ENCODE measurements at regions of chr3 and their contacts with region 1.

Region 1: GRCh38 chr3:72996473-72997333 is at the start of gene PPP4R2:
- DNase-seq: peak; percentile 83 to 98 (median 90)
- ATAC-seq: peak; percentile 85
- H3K4me3 ChIP-seq: peak within 1 kb of the TSS; percentile 90
- H3K4me3 Mint-ChIP-seq: peak within 1 kb of the TSS; percentile 88
- H3K27ac ChIP-seq: peak within 1 kb of the TSS; percentile 89 to 93
- H3K27ac Mint-ChIP-seq: peak within 1 kb of the TSS; percentile 86
- H3K4me1 ChIP-seq: peaks cover 29% of the 10 kb centered on the region
- H3K4me1 Mint-ChIP-seq: peaks cover 48% of the 10 kb centered on the region
- H3K27me3 ChIP-seq: no peaks in the 10 kb centered on the region
- H3K27me3 Mint-ChIP-seq: no peaks in the 10 kb centered on the region
- CTCF ChIP-seq: no peak
- total RNA-seq, gene PPP4R2: 67.8 to 80.3 TPM

Region 2: GRCh38 chr3:72447059-72447946 is 549.4 kb before region 1 on chr3:
- CTCF ChIA-PET with region 1: no interaction called
- POLR2A ChIA-PET with region 1: no interaction called
- intact Hi-C with region 1: loop called in 1 of 2 experiments (anchors 2 kb)
- DNase-seq: peak; percentile 86 to 98 (median 93)
- ATAC-seq: peak; percentile 89
- H3K4me3 ChIP-seq: peak overlapping the region; percentile 69
- H3K4me3 Mint-ChIP-seq: peak overlapping the region; percentile 85
- H3K27ac ChIP-seq: peak overlapping the region in 1 of 2 donors; percentile 55
- H3K27ac Mint-ChIP-seq: peak overlapping the region; percentile 74
- H3K4me1 ChIP-seq: peaks cover 16% of the 10 kb centered on the region
- H3K4me1 Mint-ChIP-seq: peaks cover 43% of the 10 kb centered on the region
- H3K27me3 ChIP-seq: no peaks in the 10 kb centered on the region
- H3K27me3 Mint-ChIP-seq: no peaks in the 10 kb centered on the region
- CTCF ChIP-seq: peak; percentile 13

Region 3: DNA sequence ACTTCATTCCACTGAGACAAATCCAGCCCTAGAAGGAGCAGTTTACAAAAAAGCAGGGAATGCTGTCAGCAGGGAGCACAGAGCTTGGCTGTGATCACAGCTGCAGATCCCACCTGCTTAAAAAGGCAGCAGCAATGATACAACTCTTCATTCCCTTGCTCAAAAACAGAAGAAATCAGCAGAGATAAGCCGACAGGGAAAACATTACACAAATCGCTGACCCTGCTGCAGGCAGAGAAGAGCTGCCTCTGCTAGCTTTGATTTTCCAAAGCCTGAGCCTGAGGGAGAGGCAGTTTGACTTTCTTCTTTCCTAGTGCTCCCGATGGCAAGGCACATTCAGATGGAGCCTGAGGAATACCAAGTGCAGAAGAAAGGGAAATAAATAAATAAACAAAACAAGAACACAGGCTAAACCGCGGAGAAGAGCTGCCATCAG is 228.7 kb before region 1 on chr3:
- CTCF ChIA-PET with region 1: no interaction called
- POLR2A ChIA-PET with region 1: interaction called, 3 read pairs
- intact Hi-C with region 1: loop called in 1 of 2 experiments (anchors 10 kb)
- DNase-seq: no peak
- ATAC-seq: no peak
- H3K4me3 ChIP-seq: no peak overlapping the region
- H3K4me3 Mint-ChIP-seq: no peak overlapping the region
- H3K27ac ChIP-seq: no peak overlapping the region
- H3K27ac Mint-ChIP-seq: no peak overlapping the region
- H3K4me1 ChIP-seq: no peaks in the 10 kb centered on the region
- H3K4me1 Mint-ChIP-seq: peaks cover 26% of the 10 kb centered on the region
- H3K27me3 ChIP-seq: no peaks in the 10 kb centered on the region
- H3K27me3 Mint-ChIP-seq: no peaks in the 10 kb centered on the region
- CTCF ChIP-seq: no peak

Region 4: DNA sequence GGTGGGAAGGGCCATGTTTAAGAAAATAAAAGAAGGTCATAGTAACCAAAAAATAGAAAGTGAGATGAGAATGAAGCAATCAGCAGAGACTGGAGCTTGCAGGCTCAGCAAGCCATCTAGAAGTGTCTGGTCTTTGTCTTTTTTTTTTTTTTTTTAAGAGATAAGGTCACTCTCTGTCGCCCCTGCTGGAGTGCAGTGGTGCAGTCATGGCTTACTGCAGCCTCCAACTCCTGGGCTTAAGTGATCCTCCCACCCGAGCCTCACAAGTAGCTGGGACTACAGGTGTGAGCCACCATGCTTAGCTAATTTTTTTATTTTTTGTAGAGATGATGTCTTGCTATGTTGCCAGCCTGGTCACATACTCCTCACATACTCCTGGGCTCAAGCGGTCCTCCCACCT is 72.6 kb before region 1 on chr3:
- CTCF ChIA-PET with region 1: no interaction called
- POLR2A ChIA-PET with region 1: no interaction called
- intact Hi-C with region 1: no loop called
- DNase-seq: peak in 1 of 14 experiments; percentile 1
- ATAC-seq: no peak
- H3K4me3 ChIP-seq: no peak overlapping the region
- H3K4me3 Mint-ChIP-seq: no peak overlapping the region
- H3K27ac ChIP-seq: no peak overlapping the region
- H3K27ac Mint-ChIP-seq: no peak overlapping the region
- H3K4me1 ChIP-seq: no peaks in the 10 kb centered on the region
- H3K4me1 Mint-ChIP-seq: no peaks in the 10 kb centered on the region
- H3K27me3 ChIP-seq: no peaks in the 10 kb centered on the region
- H3K27me3 Mint-ChIP-seq: peaks cover 7% of the 10 kb centered on the region
- CTCF ChIP-seq: no peak

Region 5: DNA sequence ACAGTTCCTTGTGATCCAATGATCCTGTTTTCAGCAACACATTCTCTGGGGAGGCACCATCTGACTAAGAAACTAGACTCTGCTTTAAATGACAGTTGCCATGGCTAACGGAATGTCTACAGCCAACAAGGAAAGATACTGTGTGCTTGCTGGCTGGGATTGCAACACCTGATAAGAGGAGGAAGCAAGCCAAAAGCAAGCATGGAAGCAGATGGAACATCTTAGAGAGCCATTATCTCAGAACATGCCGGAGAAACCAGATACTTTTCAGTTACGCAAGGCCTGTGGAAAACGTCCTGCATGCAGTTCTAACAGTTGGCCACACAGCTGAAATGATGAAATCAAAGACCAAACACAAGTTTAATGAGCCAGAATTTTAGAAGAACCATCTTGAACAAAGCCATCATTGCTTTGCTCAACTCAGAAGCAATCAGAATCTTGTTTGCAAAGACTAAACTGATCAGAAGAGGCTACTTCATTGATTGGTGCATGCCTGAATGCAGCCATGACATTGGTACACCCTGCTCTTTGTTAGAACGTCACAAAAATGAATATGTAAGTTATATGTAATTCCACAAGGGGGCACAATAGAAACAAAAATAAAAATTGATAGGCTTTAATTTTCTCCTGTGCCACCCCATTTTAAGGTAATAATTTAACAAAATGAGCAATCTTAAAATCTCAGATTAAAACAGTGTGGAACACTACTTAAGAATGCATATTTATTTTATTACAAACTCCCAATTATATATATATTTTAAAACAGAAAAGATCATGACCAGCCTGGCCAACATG is 58.0 kb before region 1 on chr3:
- CTCF ChIA-PET with region 1: no interaction called
- POLR2A ChIA-PET with region 1: interaction called, 3 read pairs
- intact Hi-C with region 1: loop called (anchors 1 to 2 kb)
- DNase-seq: peak in 5 of 14 experiments; percentile 25 to 75 (median 65)
- ATAC-seq: peak; percentile 100
- H3K4me3 ChIP-seq: no peak overlapping the region
- H3K4me3 Mint-ChIP-seq: no peak overlapping the region
- H3K27ac ChIP-seq: no peak overlapping the region
- H3K27ac Mint-ChIP-seq: no peak overlapping the region
- H3K4me1 ChIP-seq: no peaks in the 10 kb centered on the region
- H3K4me1 Mint-ChIP-seq: no peaks in the 10 kb centered on the region
- H3K27me3 ChIP-seq: no peaks in the 10 kb centered on the region
- H3K27me3 Mint-ChIP-seq: no peaks in the 10 kb centered on the region
- CTCF ChIP-seq: peak; percentile 77

Region 6: DNA sequence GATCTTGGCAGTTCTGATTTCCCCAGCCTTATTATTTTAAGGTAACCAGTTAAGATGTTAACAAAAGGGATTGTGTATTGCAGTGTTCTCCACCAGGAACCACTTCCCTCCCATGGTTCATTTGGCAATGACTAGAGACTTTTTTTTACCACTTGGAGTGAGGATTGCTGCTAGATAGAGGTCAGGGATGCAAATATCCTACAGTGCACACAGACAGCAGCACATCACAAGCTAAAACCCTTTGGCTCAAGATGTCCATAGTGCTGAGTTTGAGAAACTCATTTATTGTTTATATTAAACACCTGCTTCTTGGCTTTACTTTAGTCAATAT is 40.6 kb after region 1 on chr3:
- CTCF ChIA-PET with region 1: interaction called, 3 read pairs
- POLR2A ChIA-PET with region 1: no interaction called
- intact Hi-C with region 1: loop called in 1 of 2 experiments (anchors 5 kb)
- DNase-seq: no peak
- ATAC-seq: no peak
- H3K4me3 ChIP-seq: no peak overlapping the region
- H3K4me3 Mint-ChIP-seq: no peak overlapping the region
- H3K27ac ChIP-seq: no peak overlapping the region
- H3K27ac Mint-ChIP-seq: peak overlapping the region; percentile 68
- H3K4me1 ChIP-seq: peaks cover 12% of the 10 kb centered on the region
- H3K4me1 Mint-ChIP-seq: peaks cover 83% of the 10 kb centered on the region
- H3K27me3 ChIP-seq: no peaks in the 10 kb centered on the region
- H3K27me3 Mint-ChIP-seq: no peaks in the 10 kb centered on the region
- CTCF ChIP-seq: no peak

Region 7: DNA sequence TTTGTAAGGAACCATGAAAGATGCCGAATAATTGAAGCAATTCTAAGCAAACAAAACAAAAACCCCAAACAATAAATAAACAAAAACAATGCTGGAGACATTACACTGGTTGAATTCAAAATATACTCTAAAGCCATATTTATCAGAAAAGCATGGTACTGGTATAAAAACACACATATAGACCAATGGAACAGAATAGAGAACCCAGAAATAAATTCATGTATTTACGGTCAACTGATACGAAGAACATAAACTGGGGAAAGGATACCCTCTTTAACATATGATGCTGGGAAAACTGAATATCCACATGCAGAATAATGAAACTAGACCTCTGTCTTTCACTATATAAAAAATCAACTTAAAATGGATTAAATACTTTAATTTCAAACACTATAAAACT is 842.3 kb after region 1 on chr3:
- CTCF ChIA-PET with region 1: no interaction called
- POLR2A ChIA-PET with region 1: no interaction called
- intact Hi-C with region 1: no loop called
- DNase-seq: no peak
- ATAC-seq: no peak
- H3K4me3 ChIP-seq: no peak overlapping the region
- H3K4me3 Mint-ChIP-seq: no peak overlapping the region
- H3K27ac ChIP-seq: no peak overlapping the region
- H3K27ac Mint-ChIP-seq: no peak overlapping the region
- H3K4me1 ChIP-seq: no peaks in the 10 kb centered on the region
- H3K4me1 Mint-ChIP-seq: no peaks in the 10 kb centered on the region
- H3K27me3 ChIP-seq: no peaks in the 10 kb centered on the region
- H3K27me3 Mint-ChIP-seq: no peaks in the 10 kb centered on the region
- CTCF ChIP-seq: no peak

Measured in CD4-positive, alpha-beta T cell (primary cell).